Spleen (tissue), 13 donors: ENCODE measurements at regions of chr2 and their contacts with region 1.

Region 1: DNA sequence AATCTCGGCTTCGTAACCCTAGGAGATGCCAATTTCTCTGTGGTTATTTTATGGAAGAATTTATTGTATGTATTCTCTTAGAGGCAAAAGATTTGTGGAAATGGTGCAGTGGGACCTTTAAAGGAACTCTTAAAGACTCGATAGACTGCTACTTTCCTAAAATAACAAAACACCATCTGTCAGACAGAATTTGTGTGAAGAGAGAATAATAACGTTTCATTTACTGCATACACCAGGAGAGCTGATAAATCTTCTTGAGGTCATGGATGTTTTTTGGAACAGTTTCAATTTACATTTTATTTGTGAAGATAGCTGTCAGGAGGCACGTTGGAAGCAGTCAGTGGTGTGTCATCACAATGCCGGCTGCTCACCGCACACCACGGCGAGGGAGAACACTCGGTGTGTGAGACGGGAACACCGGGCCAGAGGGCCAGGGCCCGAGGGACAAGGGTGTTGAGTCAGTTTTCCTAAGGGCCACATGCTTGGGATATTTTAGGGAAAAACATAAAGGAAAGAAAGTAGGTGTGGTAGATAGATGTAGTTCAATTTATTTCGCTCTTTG is 1681.0 kb upstream of the DDX18 start:
- DNase-seq: no peak
- H3K4me3 ChIP-seq: no peak overlapping the region
- H3K27ac ChIP-seq: no peak overlapping the region
- H3K4me1 ChIP-seq: no peaks in the 10 kb centered on the region
- H3K27me3 ChIP-seq: no peaks in the 10 kb centered on the region
- CTCF ChIP-seq: no peak
- POLR2A ChIP-seq: no peak

Region 2: DNA sequence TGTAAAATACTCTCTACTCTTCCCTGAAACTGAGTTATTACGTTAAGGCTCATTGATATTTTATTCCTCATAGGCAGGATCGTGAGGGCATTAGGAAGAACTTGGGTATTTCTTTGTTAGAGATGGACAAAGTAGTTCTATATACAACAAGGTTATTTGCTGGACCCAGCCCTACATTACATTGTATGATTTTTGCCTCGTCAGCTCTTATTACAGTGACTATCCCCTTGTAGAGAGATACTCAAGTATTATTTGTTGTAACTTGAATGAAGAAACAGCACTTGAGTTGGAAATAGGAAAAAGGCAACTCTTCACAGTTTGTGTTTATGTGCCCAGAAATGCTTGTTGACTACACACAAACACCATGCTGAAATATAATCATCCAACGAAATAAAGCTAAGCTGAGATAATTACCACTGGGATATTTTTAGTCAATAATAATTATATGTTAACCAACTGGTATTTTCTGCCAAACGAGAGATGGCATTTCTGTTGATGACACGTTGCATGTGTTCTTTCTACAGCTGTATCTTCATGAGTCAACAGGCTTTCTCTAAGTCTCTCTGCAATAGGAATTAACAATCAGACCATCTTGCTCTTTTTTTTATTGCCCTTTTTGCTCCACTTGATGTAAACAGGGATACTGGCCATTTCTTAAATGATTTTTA is 743.4 kb before region 1 on chr2:
- intact Hi-C with region 1: loop called (anchors 5 kb)
- DNase-seq: no peak
- H3K4me3 ChIP-seq: no peak overlapping the region
- H3K27ac ChIP-seq: no peak overlapping the region
- H3K4me1 ChIP-seq: no peaks in the 10 kb centered on the region
- H3K27me3 ChIP-seq: no peaks in the 10 kb centered on the region
- CTCF ChIP-seq: no peak
- POLR2A ChIP-seq: no peak

Region 3: GRCh38 chr2:115848192-115848591 is 285.3 kb before region 1 on chr2:
- intact Hi-C with region 1: no loop called
- DNase-seq: peak; percentile 51
- H3K4me3 ChIP-seq: no peak overlapping the region
- H3K27ac ChIP-seq: no peak overlapping the region
- H3K4me1 ChIP-seq: no peaks in the 10 kb centered on the region
- H3K27me3 ChIP-seq: no peaks in the 10 kb centered on the region
- CTCF ChIP-seq: no peak
- POLR2A ChIP-seq: no peak

Region 4: GRCh38 chr2:116074161-116074560 is 59.3 kb before region 1 on chr2:
- intact Hi-C with region 1: no loop called
- DNase-seq: no peak
- H3K4me3 ChIP-seq: no peak overlapping the region
- H3K27ac ChIP-seq: no peak overlapping the region
- H3K4me1 ChIP-seq: no peaks in the 10 kb centered on the region
- H3K27me3 ChIP-seq: no peaks in the 10 kb centered on the region
- CTCF ChIP-seq: no peak
- POLR2A ChIP-seq: no peak

Region 5: DNA sequence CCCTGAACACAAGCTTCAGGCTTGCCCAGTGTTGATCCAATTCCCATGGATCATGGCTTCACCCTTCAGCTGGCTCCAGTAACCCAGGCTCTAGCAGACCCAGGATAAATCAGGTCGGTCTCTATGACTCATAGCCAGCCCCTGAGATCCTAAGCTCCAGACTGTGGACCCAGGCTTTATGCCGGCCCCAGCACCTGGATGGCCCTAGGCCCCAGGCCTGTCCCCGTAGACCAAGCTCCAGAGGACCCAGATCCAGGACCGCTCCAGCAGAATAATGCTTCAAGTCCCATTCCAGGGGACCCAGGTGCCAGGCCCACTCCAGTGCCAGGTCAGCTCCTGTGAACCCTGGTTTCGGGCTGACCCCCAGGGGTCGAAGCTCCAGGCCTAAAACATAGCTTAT is 91.1 kb after region 1 on chr2:
- intact Hi-C with region 1: no loop called
- DNase-seq: no peak
- H3K4me3 ChIP-seq: no peak overlapping the region
- H3K27ac ChIP-seq: no peak overlapping the region
- H3K4me1 ChIP-seq: no peaks in the 10 kb centered on the region
- H3K27me3 ChIP-seq: no peaks in the 10 kb centered on the region
- CTCF ChIP-seq: no peak
- POLR2A ChIP-seq: no peak

Region 6: GRCh38 chr2:116490511-116491145 is 357.2 kb after region 1 on chr2:
- intact Hi-C with region 1: no loop called
- DNase-seq: no peak
- H3K4me3 ChIP-seq: no peak overlapping the region
- H3K27ac ChIP-seq: no peak overlapping the region
- H3K4me1 ChIP-seq: no peaks in the 10 kb centered on the region
- H3K27me3 ChIP-seq: no peaks in the 10 kb centered on the region
- CTCF ChIP-seq: no peak
- POLR2A ChIP-seq: no peak